ENCODE measurements at regions of chr10 and their contacts with region 1.

Region 1: GRCh38 chr10:71696628-71697326 is 22.8 kb downstream of the C10orf105 start:
- DNase-seq: peak; percentile 40 to 77 (median 62)
- ATAC-seq: peak; percentile 78 to 82
- H3K4me3 Mint-ChIP-seq: peak overlapping the region in 3 of 10 donors; percentile 29 to 36 (median 30)
- H3K27ac Mint-ChIP-seq: peak overlapping the region in 6 of 10 donors; percentile 18 to 81 (median 38)
- H3K4me1 Mint-ChIP-seq: peaks cover 16 to 60% (median 54%) of the 10 kb centered on the region in 4 donors
- H3K27me3 Mint-ChIP-seq: no peaks in the 10 kb centered on the region

Region 2: GRCh38 chr10:71748671-71749191 is 52.0 kb after region 1 on chr10:
- POLR2A ChIA-PET with region 1: interaction called, 12 read pairs
- DNase-seq: peak; percentile 59 to 91 (median 81)
- ATAC-seq: peak; percentile 78 to 85
- H3K4me3 Mint-ChIP-seq: peak overlapping the region; percentile 66 to 95 (median 85)
- H3K27ac Mint-ChIP-seq: peak overlapping the region; percentile 95 to 100 (median 98)
- H3K4me1 Mint-ChIP-seq: peaks cover 56 to 100% (median 98%) of the 10 kb centered on the region in 4 donors
- H3K27me3 Mint-ChIP-seq: no peaks in the 10 kb centered on the region

Region 3: DNA sequence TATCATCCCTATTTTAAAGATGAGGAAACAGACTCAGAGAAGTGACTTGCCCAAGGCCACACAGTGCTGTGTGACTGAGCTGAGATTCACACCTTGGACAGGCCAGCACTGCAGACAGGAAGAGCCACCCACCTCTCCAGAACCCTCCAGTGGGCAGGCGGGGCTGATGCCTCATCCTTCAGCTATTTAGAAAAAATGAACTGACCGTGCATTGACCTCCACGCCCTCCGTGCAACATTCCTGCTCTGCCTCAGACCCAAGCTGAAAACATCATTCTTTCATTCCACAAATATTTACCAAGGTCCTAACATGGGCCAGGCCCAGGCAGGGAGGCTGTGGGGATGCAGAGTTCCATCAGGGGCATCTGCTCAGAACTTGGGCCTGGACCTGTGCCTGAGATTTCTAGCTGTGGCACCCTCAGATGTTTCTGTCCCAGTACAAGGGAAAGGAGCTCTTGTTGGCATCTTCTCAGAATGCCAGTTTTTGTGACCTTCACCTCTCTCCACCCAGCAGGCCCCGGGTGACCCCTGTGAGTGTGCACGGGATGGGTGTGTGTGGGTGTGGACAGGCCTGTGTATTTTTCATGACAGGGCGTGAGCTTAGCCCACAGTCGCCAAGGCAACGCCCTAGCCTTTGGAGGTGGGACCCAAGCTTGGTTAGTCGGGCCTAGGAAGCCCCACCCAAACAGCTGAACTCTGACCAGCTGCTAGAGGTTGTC is 70.1 kb after region 1 on chr10:
- POLR2A ChIA-PET with region 1: interaction called, 194 read pairs
- DNase-seq: no peak
- ATAC-seq: no peak
- H3K4me3 Mint-ChIP-seq: peak overlapping the region; percentile 68 to 88 (median 79)
- H3K27ac Mint-ChIP-seq: peak overlapping the region; percentile 81 to 98 (median 95)
- H3K4me1 Mint-ChIP-seq: peaks cover 45 to 96% (median 90%) of the 10 kb centered on the region in 4 donors
- H3K27me3 Mint-ChIP-seq: no peaks in the 10 kb centered on the region